AG04449 (cell line): ENCODE measurements at regions of chr14 and their contacts with region 1.

Region 1: DNA sequence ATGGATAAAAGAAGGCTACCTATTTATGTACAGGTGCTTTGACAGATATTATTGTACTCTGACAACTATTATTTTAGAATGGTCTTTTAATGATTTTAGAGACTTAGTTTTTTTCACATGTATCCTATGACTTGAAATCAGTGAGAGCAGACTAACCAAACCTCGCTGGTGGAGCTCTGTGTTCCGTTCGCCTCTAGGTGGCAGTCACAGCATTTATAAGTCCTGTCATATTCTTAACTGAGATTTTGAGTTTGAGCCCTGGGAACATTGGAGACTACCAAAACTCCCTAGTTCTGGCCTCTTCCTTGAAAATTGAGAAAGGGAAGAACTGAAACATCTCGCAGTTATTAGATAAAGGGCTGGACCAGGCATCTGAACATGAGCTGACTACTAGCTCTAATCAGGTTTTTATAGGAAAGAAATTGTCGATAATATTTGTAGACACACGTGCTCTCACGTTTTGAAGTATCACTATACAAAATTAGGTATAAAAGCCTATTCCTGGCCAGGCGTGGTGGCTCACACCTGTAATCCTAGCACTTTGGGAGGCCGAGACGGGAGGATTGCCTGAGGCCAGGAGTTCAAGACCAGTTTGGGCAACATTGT is 48.3 kb downstream of the TTLL5 start:
- DNase-seq: peak; percentile 44
- H3K4me3 ChIP-seq: no peak overlapping the region
- CTCF ChIP-seq: peak; percentile 79

Region 2: GRCh38 chr14:75689012-75689411 is 20.3 kb before region 1 on chr14:
- CTCF ChIA-PET with region 1: interaction called, 33 read pairs
- POLR2A ChIA-PET with region 1: no interaction called
- DNase-seq: no peak
- H3K4me3 ChIP-seq: no peak overlapping the region
- CTCF ChIP-seq: no peak

Region 3: DNA sequence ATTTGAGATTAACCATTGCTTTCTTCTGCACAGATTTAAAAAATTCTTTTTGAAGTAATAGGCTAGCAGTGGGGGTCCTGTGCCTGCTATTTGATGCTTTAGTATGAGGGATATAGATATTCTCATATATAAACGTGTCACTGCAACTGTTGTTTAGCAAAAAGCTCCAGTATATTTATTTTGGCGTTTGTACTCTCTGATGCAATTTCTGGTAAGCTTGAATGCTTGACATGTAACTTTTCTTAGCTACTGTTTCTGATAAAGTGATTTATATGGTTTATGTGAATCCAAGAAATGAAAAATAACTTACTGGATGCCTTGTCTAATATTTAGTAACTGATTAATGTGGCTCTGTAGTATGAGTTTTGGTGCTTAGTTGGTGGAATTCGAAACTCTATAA is 28.9 kb after region 1 on chr14:
- CTCF ChIA-PET with region 1: interaction called, 24 read pairs
- POLR2A ChIA-PET with region 1: no interaction called
- DNase-seq: no peak
- H3K4me3 ChIP-seq: no peak overlapping the region
- CTCF ChIP-seq: no peak

Region 4: DNA sequence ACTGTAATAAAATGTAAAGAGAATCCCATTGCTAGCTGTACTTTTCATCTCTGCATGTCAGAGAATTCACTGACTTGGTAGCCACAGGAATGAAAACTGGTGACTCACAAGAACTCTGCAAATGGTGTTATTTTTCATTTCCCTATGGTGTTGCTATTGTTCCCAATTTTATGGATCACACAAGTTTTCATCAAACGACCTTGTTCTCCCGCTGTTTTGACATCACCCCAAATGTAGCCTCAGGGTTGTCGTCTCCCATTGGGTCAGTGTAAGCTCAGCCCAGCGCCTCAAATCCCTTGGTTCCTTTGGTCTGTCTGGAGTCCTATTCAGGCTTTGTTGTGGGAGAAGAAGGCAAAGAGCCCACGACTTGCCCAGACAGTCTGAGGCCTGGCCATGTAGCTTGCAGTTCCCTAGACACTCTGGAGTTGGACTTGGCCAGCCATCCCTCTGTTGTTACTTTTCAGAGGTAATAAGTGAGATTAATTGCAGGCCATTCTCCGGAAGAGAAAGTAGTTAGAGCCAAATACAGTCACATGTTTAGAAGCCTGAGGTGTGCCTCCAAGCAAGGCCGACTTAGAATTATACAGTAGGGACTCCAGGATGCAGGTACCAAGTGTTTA is 113.3 kb after region 1 on chr14:
- CTCF ChIA-PET with region 1: interaction called, 14 read pairs
- POLR2A ChIA-PET with region 1: interaction called, 3 read pairs
- DNase-seq: no peak
- H3K4me3 ChIP-seq: no peak overlapping the region
- CTCF ChIP-seq: no peak

Region 5: GRCh38 chr14:75911883-75912282 is 202.6 kb after region 1 on chr14:
- CTCF ChIA-PET with region 1: interaction called, 67 read pairs
- POLR2A ChIA-PET with region 1: no interaction called
- DNase-seq: no peak
- H3K4me3 ChIP-seq: no peak overlapping the region
- CTCF ChIP-seq: no peak

Region 6: DNA sequence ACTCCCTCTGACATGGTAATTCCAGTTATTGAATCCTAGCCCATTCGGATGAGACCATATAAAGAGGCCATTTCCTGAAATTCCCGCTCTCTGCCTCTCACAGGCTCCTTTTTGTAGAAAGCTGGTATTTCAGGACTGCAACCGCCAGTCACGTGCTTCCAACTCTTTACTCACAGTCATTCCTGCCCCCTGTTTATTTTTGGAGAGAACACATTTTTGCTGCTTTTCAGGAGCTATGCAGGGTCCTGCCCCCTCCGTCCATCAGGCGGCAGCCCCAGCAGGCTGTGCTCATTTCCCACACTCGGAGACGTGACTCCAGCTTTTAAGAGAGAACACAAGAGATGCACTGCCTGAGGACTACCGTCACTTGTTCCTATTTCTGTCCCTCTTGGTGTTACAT is 303.0 kb after region 1 on chr14:
- CTCF ChIA-PET with region 1: interaction called, 26 read pairs
- POLR2A ChIA-PET with region 1: no interaction called
- DNase-seq: no peak
- H3K4me3 ChIP-seq: no peak overlapping the region
- CTCF ChIP-seq: no peak

Region 7: GRCh38 chr14:76386915-76387782 is 677.8 kb after region 1 on chr14:
- CTCF ChIA-PET with region 1: interaction called, 40 read pairs
- POLR2A ChIA-PET with region 1: no interaction called
- DNase-seq: no peak
- H3K4me3 ChIP-seq: no peak overlapping the region
- CTCF ChIP-seq: peak; percentile 95